Endothelial cell of umbilical vein (primary cell): ENCODE measurements at regions of chr17 and their contacts with region 1.

Region 1: DNA sequence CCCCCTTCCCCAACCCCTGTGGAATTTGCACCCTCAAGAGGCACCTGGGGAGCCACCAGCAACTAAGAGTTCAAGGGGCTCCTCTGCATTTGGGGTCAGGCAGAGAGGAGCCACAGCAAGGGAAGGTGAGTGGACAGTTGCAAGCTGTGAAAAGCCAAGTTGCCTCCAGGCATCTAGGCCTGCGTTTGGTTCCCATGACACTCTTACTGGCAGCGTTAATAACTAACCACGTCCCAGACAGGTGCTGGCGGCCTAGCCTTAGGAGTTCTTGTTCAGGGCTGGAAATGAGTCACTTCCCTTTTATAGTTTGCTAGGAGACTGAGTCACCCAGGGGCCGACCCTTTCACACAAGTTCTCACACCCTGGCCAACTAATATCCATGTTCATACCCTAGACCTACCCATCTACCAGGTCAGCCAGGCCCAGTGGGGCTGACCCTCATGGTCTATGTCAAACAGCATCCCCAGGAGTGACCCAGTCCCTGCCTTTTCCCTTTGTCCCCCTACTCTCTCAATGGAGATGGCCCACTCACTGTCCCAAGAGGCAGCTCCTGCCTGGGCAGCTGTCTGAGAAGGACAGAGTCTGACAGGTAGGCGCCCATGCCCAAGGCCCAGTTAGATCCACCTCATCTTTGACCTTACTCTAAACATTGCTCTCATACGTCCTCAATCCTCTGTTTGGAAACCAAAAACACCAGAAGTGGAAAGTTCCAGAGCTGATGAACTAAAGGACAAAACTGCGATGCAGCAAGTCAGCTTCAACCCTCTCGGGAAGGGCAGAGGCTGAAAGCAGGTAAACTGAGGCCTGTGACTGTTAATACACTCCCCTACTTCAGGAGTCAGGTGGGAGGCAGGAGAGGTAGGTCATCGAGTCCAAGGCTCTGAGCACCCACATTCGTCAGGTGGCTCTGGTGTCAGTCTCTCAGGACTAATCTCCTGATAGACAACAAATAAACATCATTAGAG is 300.6 kb downstream of the SOX9 start:
- DNase-seq: peak; percentile 80
- H3K4me3 ChIP-seq: no peak overlapping the region
- H3K27ac ChIP-seq: peak overlapping the region; percentile 85
- H3K4me1 ChIP-seq: peaks cover 16% of the 10 kb centered on the region
- H3K27me3 ChIP-seq: no peaks in the 10 kb centered on the region
- CTCF ChIP-seq: no peak
- POLR2A ChIP-seq: no peak

Region 2: GRCh38 chr17:72392056-72393010 is 29.1 kb before region 1 on chr17:
- CTCF ChIA-PET with region 1: interaction called, 3 read pairs
- POLR2A ChIA-PET with region 1: no interaction called
- dilution Hi-C with region 1: no loop called
- intact Hi-C with region 1: loop called (anchors 1 kb)
- DNase-seq: no peak
- H3K4me3 ChIP-seq: no peak overlapping the region
- H3K27ac ChIP-seq: no peak overlapping the region
- H3K4me1 ChIP-seq: peaks cover 19% of the 10 kb centered on the region
- H3K27me3 ChIP-seq: no peaks in the 10 kb centered on the region
- CTCF ChIP-seq: no peak
- POLR2A ChIP-seq: no peak